Heart right ventricle (tissue), 16 donors: ENCODE measurements at regions of chr9 and their contacts with region 1.

Region 1: GRCh38 chr9:7570107-7570720 is 229.4 kb downstream of the DMAC1 start:
- DNase-seq: peak in 1 of 2 donors; percentile 37
- ATAC-seq: peak in 2 of 8 donors; percentile 38 to 57
- H3K4me3 ChIP-seq: no peak overlapping the region
- H3K27ac ChIP-seq: no peak overlapping the region
- H3K4me1 ChIP-seq: no peaks in the 10 kb centered on the region
- H3K27me3 ChIP-seq: peaks cover 0 to 4% (median 0%) of the 10 kb centered on the region in 7 donors
- CTCF ChIP-seq: peak; percentile 53 to 86 (median 80)

Region 2: DNA sequence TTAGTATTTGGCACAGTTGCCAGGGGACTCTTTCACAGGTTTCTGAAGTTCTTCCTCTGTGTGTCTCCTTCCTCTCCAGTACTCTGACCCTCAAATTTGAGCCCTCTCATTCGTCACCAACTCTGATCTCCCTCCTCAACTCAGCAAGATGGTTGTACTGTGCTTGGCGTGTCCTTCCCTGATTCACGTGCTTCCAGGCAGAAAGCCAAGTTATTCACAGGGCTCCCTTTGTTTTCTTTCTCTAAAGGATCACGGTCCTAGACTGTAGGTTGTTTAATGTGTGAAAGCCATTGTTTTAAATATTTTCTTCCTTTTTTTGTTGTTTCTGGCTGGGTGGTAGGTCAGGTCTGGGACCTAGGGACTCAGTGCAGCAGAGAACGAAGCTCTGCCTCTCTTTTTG is 86.4 kb after region 1 on chr9:
- intact Hi-C with region 1: loop called in 1 of 10 experiments (anchors 5 kb)
- DNase-seq: peak in 1 of 2 donors; percentile 30
- ATAC-seq: peak; percentile 23 to 78 (median 54)
- H3K4me3 ChIP-seq: no peak overlapping the region
- H3K27ac ChIP-seq: no peak overlapping the region
- H3K4me1 ChIP-seq: peaks cover 0 to 20% (median 12%) of the 10 kb centered on the region in 9 donors
- H3K27me3 ChIP-seq: no peaks in the 10 kb centered on the region
- CTCF ChIP-seq: no peak

Region 3: GRCh38 chr9:7976167-7976755 is 406.0 kb after region 1 on chr9:
- intact Hi-C with region 1: loop called in 1 of 10 experiments (anchors 10 kb)
- DNase-seq: no peak
- ATAC-seq: peak in 6 of 8 donors; percentile 30 to 61 (median 50)
- H3K4me3 ChIP-seq: no peak overlapping the region
- H3K27ac ChIP-seq: peak overlapping the region in 1 of 10 donors; percentile 68
- H3K4me1 ChIP-seq: peaks cover 0 to 49% (median 0%) of the 10 kb centered on the region in 9 donors
- H3K27me3 ChIP-seq: no peaks in the 10 kb centered on the region
- CTCF ChIP-seq: no peak

Region 4: DNA sequence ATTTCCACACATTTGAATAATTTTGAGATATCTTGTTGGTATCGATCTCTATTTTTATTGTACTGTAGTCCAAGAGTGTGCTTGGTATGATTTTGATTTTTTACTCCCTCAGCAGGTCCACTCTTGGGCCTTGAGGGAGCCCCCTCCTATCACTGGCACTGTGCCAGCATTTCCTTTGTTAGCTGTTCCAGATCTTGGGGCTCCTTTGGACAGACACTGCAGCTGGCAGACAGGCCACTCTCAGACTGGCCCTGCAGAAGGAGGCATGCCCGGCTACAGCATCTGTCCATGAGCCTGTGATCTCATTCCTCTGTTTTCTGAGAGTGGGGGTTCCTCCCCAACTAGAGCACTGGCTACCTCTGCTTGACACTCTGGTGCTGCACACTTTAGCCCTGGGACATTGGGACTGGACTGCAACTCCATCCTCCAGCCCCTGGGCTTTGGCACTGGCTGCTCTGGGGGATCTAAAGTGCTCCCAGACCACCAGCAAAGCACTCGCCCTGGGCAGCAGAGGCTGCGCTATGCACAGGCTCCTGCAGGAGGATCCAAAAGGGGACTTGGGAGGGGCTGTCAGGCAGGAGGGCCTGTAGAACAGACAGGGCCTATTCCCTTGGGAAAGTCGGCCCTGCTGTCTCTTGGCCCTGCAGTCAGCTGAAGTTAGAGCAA is 500.7 kb after region 1 on chr9:
- intact Hi-C with region 1: no loop called
- DNase-seq: no peak
- ATAC-seq: no peak
- H3K4me3 ChIP-seq: no peak overlapping the region
- H3K27ac ChIP-seq: no peak overlapping the region
- H3K4me1 ChIP-seq: no peaks in the 10 kb centered on the region
- H3K27me3 ChIP-seq: no peaks in the 10 kb centered on the region
- CTCF ChIP-seq: no peak